ENCODE measurements at regions of chr11 and their contacts with region 1.

Region 1: GRCh38 chr11:108121274-108122155 is at the start of gene ACAT1:
- DNase-seq: peak; percentile 96
- ATAC-seq: peak; percentile 99
- H3K4me3 Mint-ChIP-seq: peak within 1 kb of the TSS; percentile 87
- H3K27ac Mint-ChIP-seq: peak within 1 kb of the TSS; percentile 56
- H3K4me1 Mint-ChIP-seq: peaks cover 39% of the 10 kb centered on the region
- H3K27me3 Mint-ChIP-seq: no peaks in the 10 kb centered on the region
- CTCF ChIP-seq: no peak
- total RNA-seq, gene ACAT1: 50.1 and 51.1 TPM in 2 replicates

Region 2: GRCh38 chr11:108008656-108009496 is 112.6 kb before region 1 on chr11 and contains the start of gene CUL5:
- CTCF ChIA-PET with region 1: no interaction called
- POLR2A ChIA-PET with region 1: no interaction called
- intact Hi-C with region 1: loop called (anchors 1 kb)
- DNase-seq: peak; percentile 89
- ATAC-seq: peak; percentile 87
- H3K4me3 Mint-ChIP-seq: peak within 1 kb of the TSS; percentile 99
- H3K27ac Mint-ChIP-seq: peak within 1 kb of the TSS; percentile 96
- H3K4me1 Mint-ChIP-seq: peaks cover 10% of the 10 kb centered on the region
- H3K27me3 Mint-ChIP-seq: no peaks in the 10 kb centered on the region
- CTCF ChIP-seq: no peak
- total RNA-seq, gene CUL5: 38.4 and 42.0 TPM in 2 replicates

Region 3: DNA sequence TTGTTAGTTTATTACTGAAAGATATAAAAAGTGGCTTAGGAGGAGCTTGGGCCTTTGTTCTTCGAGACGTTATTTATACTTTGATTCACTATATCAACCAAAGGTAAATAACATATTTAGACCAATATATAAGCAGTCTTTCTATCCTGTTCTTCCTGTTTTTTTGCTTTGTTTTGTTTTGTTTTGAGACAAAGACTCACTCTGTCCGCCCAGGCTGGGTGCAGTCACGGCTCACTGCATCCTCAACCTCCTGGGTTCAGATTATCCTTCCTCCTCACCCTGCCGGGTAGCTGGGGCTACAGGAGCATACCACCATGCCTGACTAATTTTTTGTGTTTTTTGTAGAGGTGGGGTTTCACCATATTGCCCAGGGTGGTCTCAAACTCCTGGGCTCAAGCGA is 168.2 kb after region 1 on chr11:
- CTCF ChIA-PET with region 1: no interaction called
- POLR2A ChIA-PET with region 1: no interaction called
- intact Hi-C with region 1: loop called (anchors 5 kb)
- DNase-seq: no peak
- ATAC-seq: peak; percentile 79
- H3K4me3 Mint-ChIP-seq: no peak overlapping the region
- H3K27ac Mint-ChIP-seq: peak overlapping the region; percentile 82
- H3K4me1 Mint-ChIP-seq: peaks cover 9% of the 10 kb centered on the region
- H3K27me3 Mint-ChIP-seq: no peaks in the 10 kb centered on the region
- CTCF ChIP-seq: no peak

Region 4: GRCh38 chr11:108647701-108648527 is 526.4 kb after region 1 on chr11:
- CTCF ChIA-PET with region 1: interaction called, 23 read pairs
- POLR2A ChIA-PET with region 1: interaction called, 3 read pairs
- intact Hi-C with region 1: loop called (anchors 1 kb)
- DNase-seq: no peak
- ATAC-seq: peak; percentile 71
- H3K4me3 Mint-ChIP-seq: no peak overlapping the region
- H3K27ac Mint-ChIP-seq: no peak overlapping the region
- H3K4me1 Mint-ChIP-seq: no peaks in the 10 kb centered on the region
- H3K27me3 Mint-ChIP-seq: peaks cover 9% of the 10 kb centered on the region
- CTCF ChIP-seq: no peak

Region 5: GRCh38 chr11:108664730-108665525 is 543.4 kb after region 1 on chr11 and contains the start of gene DDX10:
- CTCF ChIA-PET with region 1: no interaction called
- POLR2A ChIA-PET with region 1: interaction called, 3 read pairs
- intact Hi-C with region 1: loop called (anchors 2 kb)
- DNase-seq: peak; percentile 95
- ATAC-seq: peak; percentile 100
- H3K4me3 Mint-ChIP-seq: peak within 1 kb of the TSS; percentile 100
- H3K27ac Mint-ChIP-seq: peak within 1 kb of the TSS; percentile 96
- H3K4me1 Mint-ChIP-seq: peaks cover 46% of the 10 kb centered on the region
- H3K27me3 Mint-ChIP-seq: no peaks in the 10 kb centered on the region
- CTCF ChIP-seq: no peak
- total RNA-seq, gene DDX10: 37.7 and 43.3 TPM in 2 replicates